Mammary epithelial cell (primary cell): ENCODE measurements at regions of chr12 and their contacts with region 1.

Region 1: GRCh38 chr12:94532490-94533422 is 73.1 kb upstream of the CEP83 start:
- DNase-seq: peak; percentile 32
- H3K4me3 ChIP-seq: no peak overlapping the region
- H3K27ac ChIP-seq: no peak overlapping the region
- H3K4me1 ChIP-seq: no peaks in the 10 kb centered on the region
- H3K27me3 ChIP-seq: no peaks in the 10 kb centered on the region
- CTCF ChIP-seq: peak; percentile 64 to 80

Region 2: GRCh38 chr12:94133964-94134795 is 398.6 kb before region 1 on chr12:
- CTCF ChIA-PET with region 1: no interaction called
- dilution Hi-C with region 1: no loop called
- in situ Hi-C with region 1: loop called (anchors 5 to 10 kb)
- intact Hi-C with region 1: loop called (anchors 1 kb)
- DNase-seq: peak; percentile 36
- H3K4me3 ChIP-seq: no peak overlapping the region
- H3K27ac ChIP-seq: no peak overlapping the region
- H3K4me1 ChIP-seq: no peaks in the 10 kb centered on the region
- H3K27me3 ChIP-seq: no peaks in the 10 kb centered on the region
- CTCF ChIP-seq: peak; percentile 58 to 71

Region 3: GRCh38 chr12:94139816-94140215 is 392.9 kb before region 1 on chr12:
- CTCF ChIA-PET with region 1: no interaction called
- dilution Hi-C with region 1: no loop called
- in situ Hi-C with region 1: loop called (anchors 5 to 10 kb)
- intact Hi-C with region 1: no loop called
- DNase-seq: no peak
- H3K4me3 ChIP-seq: no peak overlapping the region
- H3K27ac ChIP-seq: no peak overlapping the region
- H3K4me1 ChIP-seq: no peaks in the 10 kb centered on the region
- H3K27me3 ChIP-seq: peaks cover under 1% of the 10 kb centered on the region
- CTCF ChIP-seq: no peak

Region 4: GRCh38 chr12:94326727-94327126 is 206.0 kb before region 1 on chr12:
- CTCF ChIA-PET with region 1: no interaction called
- dilution Hi-C with region 1: no loop called
- in situ Hi-C with region 1: no loop called
- intact Hi-C with region 1: loop called (anchors 5 kb)
- DNase-seq: peak; percentile 85
- H3K4me3 ChIP-seq: no peak overlapping the region
- H3K27ac ChIP-seq: no peak overlapping the region
- H3K4me1 ChIP-seq: no peaks in the 10 kb centered on the region
- H3K27me3 ChIP-seq: no peaks in the 10 kb centered on the region
- CTCF ChIP-seq: no peak

Region 5: GRCh38 chr12:94459728-94460615 is 72.8 kb before region 1 on chr12 and contains the start of gene CEP83:
- CTCF ChIA-PET with region 1: no interaction called
- dilution Hi-C with region 1: no loop called
- in situ Hi-C with region 1: no loop called
- intact Hi-C with region 1: loop called (anchors 1 kb)
- DNase-seq: peak; percentile 93
- H3K4me3 ChIP-seq: peak within 1 kb of the TSS; percentile 72 to 95 (median 91)
- H3K27ac ChIP-seq: peak within 1 kb of the TSS; percentile 95
- H3K4me1 ChIP-seq: no peaks in the 10 kb centered on the region
- H3K27me3 ChIP-seq: no peaks in the 10 kb centered on the region
- CTCF ChIP-seq: no peak
- total RNA-seq, gene CEP83: 10.0 to 22.8 TPM

Region 6: DNA sequence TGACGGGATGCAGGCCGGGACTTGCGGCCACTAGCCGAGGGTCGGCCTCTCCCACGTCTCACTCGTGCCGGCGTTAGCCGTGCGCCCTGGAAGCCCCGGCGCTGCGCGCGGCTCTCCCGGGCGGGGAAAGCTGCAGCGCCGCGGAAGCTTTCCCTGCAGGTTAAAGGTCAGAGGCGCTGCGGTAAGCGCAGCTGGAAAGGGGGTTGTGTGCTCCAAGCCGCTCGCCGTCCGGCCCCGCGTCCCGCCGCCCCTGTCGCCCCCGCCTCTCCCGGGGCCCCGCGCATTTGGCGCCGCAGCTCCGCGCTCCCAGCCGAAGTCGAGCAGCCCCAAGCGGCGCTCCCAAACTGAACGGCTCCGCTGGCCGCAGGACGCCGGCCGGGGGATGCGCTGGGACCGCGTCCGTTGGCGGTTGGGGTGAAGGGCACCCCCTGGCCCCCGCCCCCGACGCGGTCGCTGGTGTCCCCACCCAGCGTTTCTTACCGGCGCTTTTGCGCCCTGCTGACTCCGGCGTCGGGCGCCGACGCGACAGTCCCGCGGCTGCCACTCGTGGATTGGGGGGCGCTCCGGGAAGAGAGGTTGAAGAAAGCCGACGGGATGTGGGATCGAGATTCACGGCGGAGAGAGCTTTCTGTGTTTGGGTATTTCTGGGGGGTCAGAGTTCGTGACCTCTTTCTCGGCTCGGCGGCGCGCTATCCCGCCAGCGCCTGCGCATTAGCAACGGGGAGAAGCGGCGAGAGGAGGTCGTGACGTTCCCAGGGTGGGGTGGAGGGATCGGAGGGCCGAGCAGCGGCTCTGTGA is 540.3 kb after region 1 on chr12 and contains the start of gene NR2C1:
- CTCF ChIA-PET with region 1: no interaction called
- dilution Hi-C with region 1: no loop called
- in situ Hi-C with region 1: loop called in 1 of 2 experiments (anchors 25 kb)
- intact Hi-C with region 1: no loop called
- DNase-seq: peak; percentile 87
- H3K4me3 ChIP-seq: peak within 1 kb of the TSS; percentile 90 to 94 (median 92)
- H3K27ac ChIP-seq: peak within 1 kb of the TSS; percentile 84
- H3K4me1 ChIP-seq: peaks cover 5% of the 10 kb centered on the region
- H3K27me3 ChIP-seq: no peaks in the 10 kb centered on the region
- CTCF ChIP-seq: no peak
- total RNA-seq, gene NR2C1: 23.2 to 32.8 TPM

Region 7: DNA sequence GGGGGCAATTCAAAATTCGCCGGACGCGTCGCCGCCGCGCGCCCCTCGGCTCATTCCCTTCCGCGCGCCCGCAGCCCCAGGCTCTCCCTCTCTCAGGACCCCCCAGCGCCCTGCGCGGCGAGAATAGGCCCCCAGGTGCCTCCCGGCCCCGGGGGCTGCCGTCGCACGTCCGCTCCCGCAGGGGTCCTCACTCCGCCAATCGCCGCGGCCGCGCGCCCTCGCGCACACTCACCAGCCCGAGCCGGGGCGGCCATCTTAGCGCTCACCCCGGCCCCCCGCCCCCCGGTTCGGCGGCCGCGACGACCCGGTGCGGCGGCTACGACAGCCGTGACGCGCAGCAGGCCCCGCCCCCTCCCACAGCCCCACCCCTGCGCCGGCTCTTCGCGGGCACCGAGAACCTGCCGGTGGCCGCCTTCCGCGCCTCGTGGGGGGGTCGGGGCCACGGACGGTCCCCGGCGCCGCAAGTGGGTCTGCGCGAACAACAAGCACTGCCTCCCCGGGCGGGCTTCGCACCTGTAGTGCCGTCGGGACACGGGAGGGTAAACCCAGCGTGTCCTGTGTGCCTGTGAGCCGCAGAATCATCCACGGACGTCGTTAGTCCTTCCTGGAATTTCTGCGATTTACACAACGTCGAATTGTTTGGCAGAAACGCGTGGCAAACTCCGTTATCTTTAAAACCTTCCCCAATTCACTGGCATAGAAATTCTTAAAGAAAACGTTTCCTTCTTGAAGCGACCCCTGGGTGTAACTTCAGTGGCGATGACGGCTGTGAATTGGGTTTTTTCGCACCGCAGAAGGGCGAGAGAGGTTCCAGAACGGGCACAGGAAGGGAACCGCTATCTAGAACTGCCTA is 1016.0 kb after region 1 on chr12:
- CTCF ChIA-PET with region 1: no interaction called
- dilution Hi-C with region 1: no loop called
- in situ Hi-C with region 1: loop called in 1 of 2 experiments (anchors 25 kb)
- intact Hi-C with region 1: no loop called
- DNase-seq: no peak
- H3K4me3 ChIP-seq: peak overlapping the region; percentile 38 to 49 (median 44)
- H3K27ac ChIP-seq: no peak overlapping the region
- H3K4me1 ChIP-seq: peaks cover 8% of the 10 kb centered on the region
- H3K27me3 ChIP-seq: peaks cover 22% of the 10 kb centered on the region
- CTCF ChIP-seq: no peak